ENCODE measurements at regions of chr4 and their contacts with region 1.

Region 1: GRCh38 chr4:88378691-88379559 is at the start of gene HERC6:
- DNase-seq: peak; percentile 84
- CTCF ChIP-seq: peak; percentile 79

Region 2: GRCh38 chr4:88320780-88321373 is 58.0 kb before region 1 on chr4:
- CTCF ChIA-PET with region 1: interaction called, 10 read pairs
- POLR2A ChIA-PET with region 1: no interaction called
- DNase-seq: peak; percentile 73
- CTCF ChIP-seq: no peak

Region 3: GRCh38 chr4:88390128-88390527 is 11.2 kb after region 1 on chr4:
- CTCF ChIA-PET with region 1: no interaction called
- POLR2A ChIA-PET with region 1: no interaction called
- DNase-seq: no peak
- CTCF ChIP-seq: no peak

Measured in GM10248 (cell line).